Right ventricle myocardium superior (tissue), 1 donor: ENCODE measurements at regions of chr6 and their contacts with region 1.

Region 1: GRCh38 chr6:30130887-30131862 is 4.8 kb upstream of the TRIM40 start:
- DNase-seq: peak; percentile 41
- ATAC-seq: peak; percentile 94

Region 2: GRCh38 chr6:30102970-30103874 is 28.0 kb before region 1 on chr6:
- intact Hi-C with region 1: loop called (anchors 2 kb)
- DNase-seq: peak; percentile 91
- ATAC-seq: peak; percentile 87